ENCODE measurements at regions of chr12 and their contacts with region 1.

Region 1: DNA sequence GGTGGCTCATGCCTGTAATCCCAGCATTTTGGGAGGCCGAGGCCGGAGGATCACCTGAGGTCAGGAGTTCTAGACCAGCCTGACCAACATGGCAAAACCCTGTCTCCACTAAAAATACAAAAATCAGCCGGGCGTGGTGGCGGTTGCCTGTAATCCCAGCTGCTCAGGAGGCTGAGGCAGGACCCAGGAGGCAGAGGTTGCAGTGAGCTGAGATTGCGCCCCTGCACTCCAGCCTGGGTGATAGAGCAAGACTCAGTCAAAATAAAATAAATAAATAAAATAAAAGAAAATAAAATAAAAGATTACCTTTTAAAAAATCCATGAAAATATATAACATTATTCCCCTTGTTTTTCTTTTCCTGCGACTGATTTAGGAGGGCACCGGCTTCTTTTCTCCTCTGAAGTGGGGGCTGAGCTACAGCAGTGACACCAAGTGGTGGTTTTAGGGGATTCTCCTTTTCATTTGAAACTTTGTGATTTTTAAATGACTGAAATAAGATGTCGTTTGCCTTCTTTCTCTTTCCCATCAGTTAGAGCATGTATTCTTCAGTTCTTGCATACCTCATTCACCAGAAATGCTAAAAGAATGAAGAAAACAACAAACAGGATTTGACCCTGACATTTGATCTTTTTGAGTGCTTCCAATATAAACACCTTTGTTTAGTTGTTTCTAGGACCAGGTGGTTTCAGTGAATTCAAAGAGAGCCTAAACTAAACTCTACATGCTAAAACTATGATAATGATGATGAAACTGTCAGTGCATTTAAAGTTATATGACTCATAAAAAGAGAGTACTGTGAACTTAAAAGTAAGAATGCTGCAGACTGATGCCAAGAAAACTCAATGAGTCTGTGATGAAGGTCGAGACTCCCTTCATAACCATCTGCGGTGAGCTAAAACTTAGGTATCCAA is 22.6 kb upstream of the PKP2 start:
- DNase-seq: peak; percentile 76
- H3K4me3 Mint-ChIP-seq: peak overlapping the region; percentile 52
- H3K27ac Mint-ChIP-seq: peak overlapping the region; percentile 99
- H3K4me1 Mint-ChIP-seq: peaks cover 54% of the 10 kb centered on the region
- H3K27me3 Mint-ChIP-seq: no peaks in the 10 kb centered on the region
- CTCF ChIP-seq: peak; percentile 65

Region 2: DNA sequence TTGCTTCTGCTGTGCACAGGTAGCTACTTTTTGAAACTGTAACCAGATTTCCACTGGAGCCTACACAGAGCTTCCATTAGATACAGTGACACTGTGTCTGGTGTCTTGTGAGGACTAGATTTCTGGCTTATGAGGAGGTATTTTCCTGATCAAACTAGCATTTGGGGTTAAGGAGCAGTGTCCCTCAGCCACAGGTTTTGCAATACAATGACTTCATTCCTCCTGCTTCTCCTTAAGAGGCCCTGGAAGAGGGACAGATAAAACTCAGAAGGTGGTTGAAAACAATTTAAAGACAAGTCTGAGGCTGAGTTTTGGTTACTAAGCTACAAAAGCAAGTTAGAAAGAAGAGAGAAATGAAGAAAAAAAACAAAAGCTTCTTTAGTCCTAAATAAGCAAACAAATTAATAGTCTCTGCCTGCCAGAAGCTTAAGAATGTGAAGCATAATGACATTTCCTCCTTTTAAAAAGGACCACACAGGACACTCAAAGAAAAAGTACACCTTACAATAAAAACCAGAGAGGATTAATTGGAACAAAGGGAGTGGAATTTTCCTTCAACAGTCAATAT is 75.5 kb before region 1 on chr12:
- CTCF ChIA-PET with region 1: interaction called, 3 read pairs
- POLR2A ChIA-PET with region 1: interaction called, 4 read pairs
- intact Hi-C with region 1: loop called (anchors 10 kb)
- DNase-seq: peak; percentile 14
- H3K4me3 Mint-ChIP-seq: no peak overlapping the region
- H3K27ac Mint-ChIP-seq: peak overlapping the region; percentile 28
- H3K4me1 Mint-ChIP-seq: peaks cover 13% of the 10 kb centered on the region
- H3K27me3 Mint-ChIP-seq: no peaks in the 10 kb centered on the region
- CTCF ChIP-seq: no peak

Region 3: DNA sequence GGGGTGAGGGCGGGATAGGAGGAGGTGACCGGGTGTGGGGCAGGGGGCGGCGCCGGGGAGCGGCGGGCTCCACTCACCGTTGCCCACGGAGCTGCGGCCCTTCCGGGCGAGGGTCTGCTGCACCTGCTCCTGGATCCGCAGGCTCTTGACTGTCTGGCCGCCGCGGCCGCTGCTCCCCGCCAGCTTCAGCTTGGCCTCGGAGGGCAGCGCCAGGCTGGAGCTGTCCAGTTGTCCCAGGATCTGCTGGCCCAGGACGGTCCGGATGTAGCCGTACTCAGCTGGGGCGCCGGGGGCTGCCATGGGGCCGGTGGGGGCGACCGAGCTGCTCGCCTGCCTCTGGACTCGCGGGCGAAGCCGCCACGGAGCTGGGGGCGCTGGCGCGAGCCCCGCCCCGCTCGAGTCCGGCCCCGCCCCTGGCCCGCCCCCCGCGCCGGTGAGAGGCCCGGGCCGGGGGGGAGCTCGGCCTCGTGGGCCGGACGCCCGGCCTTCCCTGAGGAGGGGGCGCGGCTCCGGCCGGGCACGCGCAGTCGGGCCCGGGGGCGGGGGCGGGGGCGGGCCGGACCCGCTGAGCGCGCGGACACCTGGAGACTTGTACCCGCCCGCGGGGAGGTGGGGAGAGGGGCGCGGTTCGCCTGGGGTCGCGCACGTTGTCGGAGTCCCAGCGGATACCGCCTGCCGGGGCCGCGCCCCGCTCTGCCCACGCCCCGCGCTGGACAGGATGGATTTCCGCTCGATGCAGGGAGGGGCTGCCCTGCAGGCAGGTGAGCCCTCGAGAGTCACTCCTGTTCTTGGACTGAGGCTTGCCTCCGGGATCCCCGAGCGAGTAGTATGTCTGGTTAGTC is 22.5 kb before region 1 on chr12 and contains the start of gene PKP2:
- CTCF ChIA-PET with region 1: interaction called, 12 read pairs
- POLR2A ChIA-PET with region 1: interaction called, 135 read pairs
- intact Hi-C with region 1: loop called (anchors 1 kb)
- DNase-seq: peak; percentile 88
- H3K4me3 Mint-ChIP-seq: peak within 1 kb of the TSS; percentile 94
- H3K27ac Mint-ChIP-seq: peak within 1 kb of the TSS; percentile 96
- H3K4me1 Mint-ChIP-seq: peaks cover 41% of the 10 kb centered on the region
- H3K27me3 Mint-ChIP-seq: no peaks in the 10 kb centered on the region
- CTCF ChIP-seq: no peak
- total RNA-seq, gene PKP2: 58.5 and 88.0 TPM in 2 replicates

Region 4: GRCh38 chr12:32906407-32907165 is 12.6 kb before region 1 on chr12:
- CTCF ChIA-PET with region 1: interaction called, 8 read pairs
- POLR2A ChIA-PET with region 1: interaction called, 53 read pairs
- intact Hi-C with region 1: no loop called
- DNase-seq: peak; percentile 60
- H3K4me3 Mint-ChIP-seq: no peak overlapping the region
- H3K27ac Mint-ChIP-seq: peak overlapping the region; percentile 51
- H3K4me1 Mint-ChIP-seq: peaks cover 10% of the 10 kb centered on the region
- H3K27me3 Mint-ChIP-seq: no peaks in the 10 kb centered on the region
- CTCF ChIP-seq: no peak

Region 5: GRCh38 chr12:34022079-34022830 is 1103.1 kb after region 1 on chr12 and contains the start of gene ALG10:
- CTCF ChIA-PET with region 1: interaction called, 3 read pairs
- POLR2A ChIA-PET with region 1: no interaction called
- intact Hi-C with region 1: loop called (anchors 1 kb)
- DNase-seq: peak; percentile 99
- H3K4me3 Mint-ChIP-seq: peak within 1 kb of the TSS; percentile 95
- H3K27ac Mint-ChIP-seq: peak within 1 kb of the TSS; percentile 94
- H3K4me1 Mint-ChIP-seq: no peaks in the 10 kb centered on the region
- H3K27me3 Mint-ChIP-seq: peaks cover 11% of the 10 kb centered on the region
- CTCF ChIP-seq: peak; percentile 51
- total RNA-seq, gene ALG10: 7.6 and 7.8 TPM in 2 replicates